Heart right ventricle (tissue), 16 donors: ENCODE measurements at regions of chr4 and their contacts with region 1.

Region 1: GRCh38 chr4:88284439-88285234 is at the start of gene PPM1K:
- DNase-seq: peak; percentile 99 to 100
- ATAC-seq: peak; percentile 96 to 98 (median 98)
- H3K4me3 ChIP-seq: peak within 1 kb of the TSS; percentile 50 to 91 (median 80)
- H3K27ac ChIP-seq: peak within 1 kb of the TSS; percentile 92 to 98 (median 96)
- H3K4me1 ChIP-seq: peaks cover 0 to 31% (median 20%) of the 10 kb centered on the region in 9 donors
- H3K27me3 ChIP-seq: no peaks in the 10 kb centered on the region
- CTCF ChIP-seq: peak in 6 of 9 donors; percentile 13 to 48 (median 24)
- total RNA-seq, gene PPM1K: 160 to 357 (median 282) TPM

Region 2: DNA sequence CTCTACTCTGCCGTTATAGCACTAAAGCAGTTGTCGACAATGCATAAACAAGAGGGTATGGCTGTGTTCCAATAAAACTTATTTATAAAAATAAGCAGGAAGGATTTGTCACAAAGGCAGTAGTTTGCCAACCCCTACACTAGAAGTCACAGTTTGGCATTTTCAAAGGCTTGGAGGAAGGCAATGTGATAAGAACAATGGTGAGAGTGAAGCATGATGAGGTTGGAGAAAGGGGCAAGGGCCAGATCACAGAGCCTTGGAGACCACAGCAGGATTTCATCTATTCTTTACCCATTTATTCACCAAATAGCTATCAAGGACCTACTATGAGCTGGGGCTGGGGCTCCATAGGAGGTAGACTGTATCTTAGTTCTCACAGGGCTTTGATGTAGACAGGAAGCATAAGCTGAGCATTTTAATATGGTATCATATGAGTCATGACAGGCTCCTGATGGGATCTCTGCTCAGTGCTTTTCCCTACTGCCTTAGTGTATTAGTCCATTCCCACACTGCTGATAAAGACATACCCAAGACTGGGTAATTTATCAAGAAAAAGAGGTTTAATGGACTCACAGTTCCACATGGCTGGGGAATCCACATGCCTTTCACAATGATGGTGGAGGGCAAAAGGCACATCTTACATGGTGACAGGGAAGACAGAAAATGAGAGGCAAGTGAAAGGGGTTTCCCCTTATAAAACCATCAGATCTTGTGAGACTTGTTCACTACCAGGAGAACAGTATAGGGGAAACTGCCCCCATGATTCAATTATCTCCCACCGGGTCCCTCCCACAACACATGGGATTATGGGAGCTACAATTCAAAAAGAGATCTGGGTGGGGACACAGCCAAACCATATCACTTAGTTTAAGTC is 59.2 kb before region 1 on chr4:
- intact Hi-C with region 1: loop called in 2 of 10 experiments (anchors 5 kb)
- DNase-seq: no peak
- ATAC-seq: peak in 5 of 8 donors; percentile 26 to 58 (median 46)
- H3K4me3 ChIP-seq: no peak overlapping the region
- H3K27ac ChIP-seq: peak overlapping the region in 1 of 10 donors; percentile 39
- H3K4me1 ChIP-seq: peaks cover 0 to 40% (median 17%) of the 10 kb centered on the region in 9 donors
- H3K27me3 ChIP-seq: no peaks in the 10 kb centered on the region
- CTCF ChIP-seq: no peak

Region 3: GRCh38 chr4:88341227-88342192 is 56.9 kb after region 1 on chr4:
- intact Hi-C with region 1: loop called in 3 of 10 experiments (anchors 2 to 10 kb)
- DNase-seq: peak in 1 of 2 donors; percentile 61
- ATAC-seq: peak; percentile 95 to 99 (median 98)
- H3K4me3 ChIP-seq: no peak overlapping the region
- H3K27ac ChIP-seq: peak overlapping the region; percentile 71 to 92 (median 84)
- H3K4me1 ChIP-seq: peaks cover 0 to 29% (median 18%) of the 10 kb centered on the region in 9 donors
- H3K27me3 ChIP-seq: no peaks in the 10 kb centered on the region
- CTCF ChIP-seq: no peak

Region 4: DNA sequence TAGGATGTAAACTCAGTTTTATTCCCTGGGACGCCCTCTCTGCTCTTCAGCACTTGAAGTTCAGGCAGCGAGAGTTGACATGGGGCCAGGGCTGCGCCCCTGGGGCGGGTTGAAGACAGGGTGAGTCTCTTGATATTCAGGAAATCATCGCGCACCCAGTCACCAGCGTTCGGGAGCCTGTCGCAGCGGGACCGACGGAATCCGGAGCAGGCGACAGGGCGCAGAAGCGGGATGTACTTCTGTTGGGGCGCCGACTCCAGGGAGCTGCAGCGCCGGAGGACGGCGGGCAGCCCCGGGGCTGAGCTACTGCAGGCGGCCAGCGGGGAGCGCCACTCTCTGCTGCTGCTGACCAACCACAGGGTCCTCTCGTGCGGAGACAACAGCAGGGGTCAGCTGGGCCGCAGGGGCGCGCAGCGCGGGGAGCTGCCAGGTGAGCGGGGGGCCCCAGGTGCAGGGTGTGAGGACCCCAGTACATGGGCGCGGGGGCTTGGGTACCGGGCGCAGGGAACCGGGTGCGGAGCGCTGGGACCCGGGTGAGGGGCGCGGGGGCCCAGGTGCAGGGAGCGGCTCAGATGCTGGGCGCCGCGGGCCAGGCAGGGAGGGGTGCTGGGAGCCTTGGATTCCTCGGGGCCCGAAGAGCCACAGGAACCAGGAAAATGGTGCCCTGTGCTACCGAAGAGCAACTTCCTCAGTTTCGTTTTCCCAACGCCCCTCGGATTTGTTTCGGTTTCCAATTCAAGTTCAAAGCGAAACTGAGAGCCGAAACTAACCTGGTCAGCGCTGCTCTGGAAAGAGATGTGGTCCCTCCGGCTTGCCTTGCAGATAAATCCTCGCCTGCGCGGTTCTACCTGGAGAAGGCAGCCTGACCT is 94.3 kb after region 1 on chr4 and contains the start of gene HERC6:
- intact Hi-C with region 1: loop called in 6 of 10 experiments (anchors 2 to 5 kb)
- DNase-seq: peak; percentile 74 to 85
- ATAC-seq: peak; percentile 94 to 98 (median 96)
- H3K4me3 ChIP-seq: peak within 1 kb of the TSS; percentile 91 to 100 (median 96)
- H3K27ac ChIP-seq: peak within 1 kb of the TSS; percentile 95 to 100 (median 98)
- H3K4me1 ChIP-seq: peaks cover 0 to 14% (median 0%) of the 10 kb centered on the region in 9 donors
- H3K27me3 ChIP-seq: no peaks in the 10 kb centered on the region
- CTCF ChIP-seq: peak; percentile 50 to 89 (median 80)
- total RNA-seq, gene HERC6: 8.9 to 20.0 (median 15.8) TPM

Region 5: GRCh38 chr4:88523325-88524129 is 238.9 kb after region 1 on chr4 and contains the start of gene PYURF:
- intact Hi-C with region 1: loop called in 2 of 10 experiments (anchors 5 kb)
- DNase-seq: peak; percentile 95 to 96
- ATAC-seq: peak; percentile 98 to 99 (median 98)
- H3K4me3 ChIP-seq: peak within 1 kb of the TSS; percentile 68 to 95 (median 92)
- H3K27ac ChIP-seq: peak within 1 kb of the TSS; percentile 79 to 97 (median 92)
- H3K4me1 ChIP-seq: peaks cover 4 to 46% (median 33%) of the 10 kb centered on the region in 9 donors
- H3K27me3 ChIP-seq: no peaks in the 10 kb centered on the region
- CTCF ChIP-seq: no peak
- total RNA-seq, gene PYURF: 44.6 to 61.6 (median 47.5) TPM

Region 6: GRCh38 chr4:89196056-89196674 is 911.5 kb after region 1 on chr4:
- intact Hi-C with region 1: no loop called
- DNase-seq: no peak
- ATAC-seq: no peak
- H3K4me3 ChIP-seq: no peak overlapping the region
- H3K27ac ChIP-seq: no peak overlapping the region
- H3K4me1 ChIP-seq: no peaks in the 10 kb centered on the region
- H3K27me3 ChIP-seq: no peaks in the 10 kb centered on the region
- CTCF ChIP-seq: no peak